ENCODE measurements at regions of chr7 and their contacts with region 1.

Region 1: DNA sequence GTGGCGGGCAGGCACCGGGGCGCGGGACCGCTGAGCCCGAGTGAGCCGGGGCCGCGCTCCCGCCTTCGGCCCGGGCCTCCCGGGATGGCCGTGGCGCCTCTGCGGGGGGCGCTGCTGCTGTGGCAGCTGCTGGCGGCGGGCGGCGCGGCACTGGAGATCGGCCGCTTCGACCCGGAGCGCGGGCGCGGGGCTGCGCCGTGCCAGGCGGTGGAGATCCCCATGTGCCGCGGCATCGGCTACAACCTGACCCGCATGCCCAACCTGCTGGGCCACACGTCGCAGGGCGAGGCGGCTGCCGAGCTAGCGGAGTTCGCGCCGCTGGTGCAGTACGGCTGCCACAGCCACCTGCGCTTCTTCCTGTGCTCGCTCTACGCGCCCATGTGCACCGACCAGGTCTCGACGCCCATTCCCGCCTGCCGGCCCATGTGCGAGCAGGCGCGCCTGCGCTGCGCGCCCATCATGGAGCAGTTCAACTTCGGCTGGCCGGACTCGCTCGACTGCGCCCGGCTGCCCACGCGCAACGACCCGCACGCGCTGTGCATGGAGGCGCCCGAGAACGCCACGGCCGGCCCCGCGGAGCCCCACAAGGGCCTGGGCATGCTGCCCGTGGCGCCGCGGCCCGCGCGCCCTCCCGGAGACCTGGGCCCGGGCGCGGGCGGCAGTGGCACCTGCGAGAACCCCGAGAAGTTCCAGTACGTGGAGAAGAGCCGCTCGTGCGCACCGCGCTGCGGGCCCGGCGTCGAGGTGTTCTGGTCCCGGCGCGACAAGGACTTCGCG is 534 bp downstream of the FZD9 start:
- DNase-seq: no peak
- H3K4me3 ChIP-seq: peak overlapping the region; percentile 38 to 49
- H3K27ac ChIP-seq: no peak overlapping the region
- H3K4me1 ChIP-seq: peaks cover 0 to 11% (median 8%) of the 10 kb centered on the region in 4 donors
- H3K27me3 ChIP-seq: peaks cover 0 to 62% of the 10 kb centered on the region in 2 donors
- CTCF ChIP-seq: no peak

Region 2: DNA sequence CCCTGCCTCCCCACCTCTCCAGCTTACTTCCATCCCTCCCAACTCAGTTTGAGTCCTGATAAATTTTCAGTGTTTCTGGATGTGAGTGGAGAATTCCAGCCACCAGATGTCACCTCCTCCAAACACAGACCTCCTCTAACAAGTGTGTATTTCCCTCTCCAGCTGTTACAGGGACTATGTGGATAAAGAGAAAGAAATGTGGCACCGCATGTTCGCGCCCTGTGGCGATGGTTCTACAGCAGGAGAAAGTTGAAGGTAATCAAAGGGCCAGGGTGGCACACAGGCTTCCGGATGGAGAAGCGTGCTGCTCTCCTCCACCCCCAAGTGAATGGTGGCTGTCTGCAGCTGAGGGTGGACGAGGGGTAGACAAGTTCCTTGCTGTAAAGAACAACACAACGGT is 91.5 kb before region 1 on chr7:
- intact Hi-C with region 1: loop called (anchors 10 kb)
- DNase-seq: no peak
- H3K4me3 ChIP-seq: peak overlapping the region in 1 of 2 donors; percentile 13
- H3K27ac ChIP-seq: no peak overlapping the region
- H3K4me1 ChIP-seq: peaks cover 0 to 5% (median 2%) of the 10 kb centered on the region in 4 donors
- H3K27me3 ChIP-seq: peaks cover 0 to 8% of the 10 kb centered on the region in 2 donors
- CTCF ChIP-seq: peak; percentile 33 to 47